Tibial artery (tissue), 4 donors: ENCODE measurements at regions of chr6 and their contacts with region 1.

Region 1: DNA sequence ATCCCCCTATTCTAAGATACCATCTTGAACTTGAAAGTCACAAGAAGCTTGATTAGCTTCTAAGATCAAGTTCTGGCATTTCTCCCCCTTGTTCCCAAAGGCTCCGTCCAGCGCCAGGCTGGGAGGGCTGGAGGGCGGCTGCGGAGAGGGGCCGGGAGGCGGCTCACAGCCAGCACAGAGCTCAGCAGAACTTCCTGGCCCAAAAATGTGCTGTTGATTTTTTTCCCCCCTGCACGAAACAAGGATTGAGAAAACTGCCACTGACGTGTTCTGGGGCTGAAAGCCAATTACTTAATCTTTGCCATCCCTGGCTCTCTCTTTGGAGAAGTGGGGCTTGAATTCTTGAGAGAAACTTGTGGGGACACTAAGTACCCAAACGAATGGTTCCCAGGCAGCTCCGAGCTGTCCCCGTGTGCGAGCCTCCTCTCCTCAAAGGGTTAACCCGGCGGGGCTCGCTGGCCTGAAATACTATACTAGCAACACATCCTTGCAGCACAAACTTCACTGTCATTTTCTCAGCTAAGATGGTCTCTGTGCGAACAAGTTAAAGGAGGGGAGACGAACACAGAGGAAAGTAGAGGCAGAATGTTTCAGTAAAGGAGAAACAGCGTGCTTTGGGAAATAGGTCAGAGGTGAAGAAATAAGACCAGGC is 452 bp downstream of the TRAF3IP2 start:
- DNase-seq: peak; percentile 81 to 93
- H3K4me3 ChIP-seq: peak overlapping the region; percentile 55 to 65
- H3K27ac ChIP-seq: peak overlapping the region; percentile 91 to 96
- H3K4me1 ChIP-seq: peaks cover 3 to 52% (median 39%) of the 10 kb centered on the region in 4 donors
- H3K27me3 ChIP-seq: no peaks in the 10 kb centered on the region
- CTCF ChIP-seq: no peak

Region 2: DNA sequence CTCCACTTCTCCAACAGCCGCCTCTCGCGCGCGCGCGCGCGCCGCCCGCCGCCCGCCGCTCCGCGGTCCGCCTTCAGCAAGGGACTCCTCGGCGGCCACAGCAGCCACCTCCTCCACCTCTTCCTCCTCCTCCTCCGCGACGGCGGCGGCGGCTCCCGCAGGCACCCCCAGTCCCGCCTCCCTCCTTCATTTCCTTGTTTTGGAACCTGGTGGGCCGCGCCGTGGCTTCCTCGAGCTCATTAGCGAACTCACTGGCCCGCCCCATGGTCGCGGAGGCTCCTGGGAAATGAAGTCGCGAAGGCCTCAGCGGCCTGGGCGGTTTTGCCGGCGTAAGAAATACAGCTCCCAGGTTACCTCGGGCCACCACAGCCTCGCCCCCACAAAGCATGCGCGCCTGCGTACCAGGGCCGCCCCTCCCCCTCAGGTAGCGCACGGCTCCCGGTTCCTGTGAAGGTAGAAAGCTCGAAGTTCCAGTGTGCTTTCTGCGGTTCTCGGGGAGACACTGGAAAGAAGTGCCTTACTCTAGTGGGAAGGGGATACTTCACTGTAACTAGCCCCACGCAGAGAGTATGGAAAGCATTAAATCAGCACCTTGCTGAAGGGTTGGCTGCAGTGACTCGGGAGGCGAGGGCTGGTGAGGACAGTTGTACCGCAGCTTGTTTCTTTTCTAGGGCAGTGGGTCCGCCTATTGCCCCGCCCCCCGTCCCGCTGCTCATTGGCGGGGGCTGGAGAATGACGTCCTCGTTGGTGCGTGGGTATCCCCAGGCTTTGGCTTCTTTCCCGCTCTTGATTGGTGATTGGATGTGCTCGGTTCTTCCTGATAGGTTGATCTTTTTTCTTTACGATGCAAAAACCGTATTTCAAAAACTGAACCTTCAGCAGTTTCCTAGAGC is 789.8 kb before region 1 on chr6 and contains the start of gene CDK19:
- intact Hi-C with region 1: no loop called
- DNase-seq: peak; percentile 99
- H3K4me3 ChIP-seq: peak within 1 kb of the TSS; percentile 74 to 75
- H3K27ac ChIP-seq: peak within 1 kb of the TSS; percentile 92 to 97
- H3K4me1 ChIP-seq: peaks cover 0 to 19% (median 15%) of the 10 kb centered on the region in 4 donors
- H3K27me3 ChIP-seq: no peaks in the 10 kb centered on the region
- CTCF ChIP-seq: no peak

Region 3: GRCh38 chr6:110965629-110966229 is 639.5 kb before region 1 on chr6:
- intact Hi-C with region 1: no loop called
- DNase-seq: no peak
- H3K4me3 ChIP-seq: no peak overlapping the region
- H3K27ac ChIP-seq: no peak overlapping the region
- H3K4me1 ChIP-seq: no peaks in the 10 kb centered on the region
- H3K27me3 ChIP-seq: no peaks in the 10 kb centered on the region
- CTCF ChIP-seq: no peak

Region 4: DNA sequence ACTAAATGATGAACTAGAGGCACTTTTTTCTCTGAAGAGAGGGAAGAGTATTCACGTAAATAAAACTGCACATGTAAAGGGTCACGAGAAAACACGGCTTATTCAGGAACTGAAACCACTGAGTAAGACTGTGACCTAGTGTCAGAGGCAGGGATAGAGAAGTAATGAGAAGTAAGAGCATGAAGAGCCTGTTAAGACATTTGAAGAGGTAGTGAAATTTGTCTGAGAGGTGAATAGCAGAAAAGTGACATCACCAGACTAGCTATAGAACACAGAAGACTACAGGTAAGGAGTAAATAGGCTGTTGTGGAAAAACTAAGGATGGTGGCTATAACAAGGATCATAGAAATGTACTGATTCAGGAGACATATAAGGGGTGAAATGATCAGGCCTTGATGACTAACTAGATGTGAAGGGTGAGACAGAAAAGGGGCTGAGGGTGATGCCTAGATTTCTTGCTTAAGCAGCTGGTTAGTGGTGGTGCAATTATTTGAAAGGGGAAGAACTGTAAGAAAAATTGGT is 199.0 kb before region 1 on chr6:
- intact Hi-C with region 1: no loop called
- DNase-seq: no peak
- H3K4me3 ChIP-seq: no peak overlapping the region
- H3K27ac ChIP-seq: no peak overlapping the region
- H3K4me1 ChIP-seq: no peaks in the 10 kb centered on the region
- H3K27me3 ChIP-seq: no peaks in the 10 kb centered on the region
- CTCF ChIP-seq: no peak

Region 5: GRCh38 chr6:111483736-111484632 is 121.2 kb before region 1 on chr6:
- intact Hi-C with region 1: loop called (anchors 5 kb)
- DNase-seq: peak; percentile 99
- H3K4me3 ChIP-seq: peak overlapping the region; percentile 62 to 99
- H3K27ac ChIP-seq: peak overlapping the region; percentile 97 to 100
- H3K4me1 ChIP-seq: peaks cover 0 to 55% (median 14%) of the 10 kb centered on the region in 4 donors
- H3K27me3 ChIP-seq: no peaks in the 10 kb centered on the region
- CTCF ChIP-seq: no peak

Region 6: GRCh38 chr6:111552241-111552744 is 52.9 kb before region 1 on chr6:
- intact Hi-C with region 1: loop called (anchors 5 kb)
- DNase-seq: peak; percentile 75 to 89
- H3K4me3 ChIP-seq: peak overlapping the region; percentile 4 to 21
- H3K27ac ChIP-seq: peak overlapping the region; percentile 62 to 78
- H3K4me1 ChIP-seq: peaks cover 0 to 58% (median 30%) of the 10 kb centered on the region in 4 donors
- H3K27me3 ChIP-seq: no peaks in the 10 kb centered on the region
- CTCF ChIP-seq: no peak

Region 7: DNA sequence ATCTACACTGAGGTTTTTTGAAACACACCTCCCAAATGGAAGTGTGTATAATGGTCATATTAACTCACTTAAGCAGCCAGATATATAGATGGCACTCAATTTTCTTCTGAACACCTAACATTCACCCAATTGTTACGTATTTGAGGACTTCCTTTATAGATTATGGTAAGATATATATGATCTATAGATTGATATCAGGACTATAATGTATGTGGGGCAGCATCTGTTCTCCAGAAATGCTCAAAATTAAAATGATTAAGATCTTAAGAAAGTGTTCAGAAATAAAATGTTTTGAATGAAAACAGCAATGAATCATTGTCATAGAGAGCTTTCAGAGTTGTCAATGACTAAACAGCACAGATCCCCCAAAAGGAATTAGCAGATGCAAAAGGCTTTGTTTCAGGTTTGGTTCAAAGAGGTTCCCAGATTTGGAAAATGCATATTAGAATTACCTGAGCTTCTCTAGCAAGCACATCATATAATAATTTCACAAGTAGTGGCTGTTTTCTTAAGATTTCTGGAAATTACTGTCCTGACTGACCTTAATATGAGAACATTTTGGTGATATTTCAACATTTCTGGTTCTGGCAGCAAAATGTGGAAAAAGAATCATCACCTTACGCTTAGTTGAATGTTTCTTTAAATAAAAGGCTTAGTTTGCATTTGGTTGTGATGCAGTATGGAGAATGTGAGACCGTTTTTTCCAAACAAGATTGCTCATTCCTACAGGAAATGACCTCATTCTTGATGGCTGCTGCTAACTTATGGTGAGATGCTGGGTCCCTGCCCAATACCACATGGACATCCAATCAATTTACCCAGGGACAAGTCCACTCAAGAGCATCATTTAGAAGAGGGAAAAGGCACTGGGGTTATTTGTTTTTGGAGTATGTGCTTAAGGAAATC is 31.1 kb before region 1 on chr6:
- intact Hi-C with region 1: loop called (anchors 2 kb)
- DNase-seq: no peak
- H3K4me3 ChIP-seq: no peak overlapping the region
- H3K27ac ChIP-seq: peak overlapping the region; percentile 30 to 82
- H3K4me1 ChIP-seq: peaks cover 0 to 45% (median 14%) of the 10 kb centered on the region in 4 donors
- H3K27me3 ChIP-seq: no peaks in the 10 kb centered on the region
- CTCF ChIP-seq: no peak